ENCODE measurements at regions of chr4 and their contacts with region 1.

Region 1: DNA sequence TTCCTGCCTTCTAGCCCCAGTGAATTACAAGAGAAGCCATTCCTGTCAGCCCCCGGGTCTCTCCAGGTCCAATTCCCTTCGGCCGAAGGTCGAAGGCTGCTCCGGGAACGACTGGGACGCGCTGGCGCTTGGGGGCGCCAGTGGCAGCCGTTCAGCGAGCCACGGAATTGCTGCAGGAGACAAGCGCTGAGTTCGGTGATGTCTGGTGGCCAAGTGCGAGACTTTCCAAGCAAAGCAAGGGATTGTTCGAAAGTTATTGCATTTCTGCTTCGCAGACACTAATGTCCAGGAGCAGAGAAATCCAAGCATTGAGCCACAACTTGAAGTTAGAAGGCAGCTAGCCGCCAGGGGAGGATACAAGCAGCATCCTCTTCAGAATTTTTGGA is 1.1 kb upstream of the DKK2 start:
- DNase-seq: no peak
- H3K4me3 Mint-ChIP-seq: no peak overlapping the region
- H3K27ac Mint-ChIP-seq: no peak overlapping the region
- H3K4me1 Mint-ChIP-seq: no peaks in the 10 kb centered on the region
- H3K27me3 Mint-ChIP-seq: no peaks in the 10 kb centered on the region
- CTCF ChIP-seq: no peak

Region 2: DNA sequence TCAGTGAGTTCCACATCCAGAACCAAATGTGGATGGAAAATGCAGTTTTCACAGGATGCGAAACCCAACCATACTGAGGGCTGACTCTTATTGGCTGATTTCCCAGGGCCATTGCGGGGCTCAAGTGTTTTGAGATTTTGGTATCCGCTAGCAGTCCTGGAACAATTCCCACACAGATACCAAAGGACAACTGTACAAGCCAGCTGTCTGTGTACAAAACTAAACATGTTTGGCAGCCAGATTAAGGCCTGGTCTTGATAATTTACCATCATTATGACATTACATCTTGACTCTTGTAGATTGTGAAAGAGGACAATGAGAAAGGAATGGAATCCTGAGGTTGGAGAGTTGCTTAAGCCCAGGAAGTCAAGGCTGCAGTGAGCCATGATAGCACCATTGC is 123.0 kb before region 1 on chr4:
- CTCF ChIA-PET with region 1: no interaction called
- intact Hi-C with region 1: loop called (anchors 5 kb)
- DNase-seq: no peak
- H3K4me3 Mint-ChIP-seq: no peak overlapping the region
- H3K27ac Mint-ChIP-seq: no peak overlapping the region
- H3K4me1 Mint-ChIP-seq: no peaks in the 10 kb centered on the region
- H3K27me3 Mint-ChIP-seq: no peaks in the 10 kb centered on the region
- CTCF ChIP-seq: no peak

Region 3: DNA sequence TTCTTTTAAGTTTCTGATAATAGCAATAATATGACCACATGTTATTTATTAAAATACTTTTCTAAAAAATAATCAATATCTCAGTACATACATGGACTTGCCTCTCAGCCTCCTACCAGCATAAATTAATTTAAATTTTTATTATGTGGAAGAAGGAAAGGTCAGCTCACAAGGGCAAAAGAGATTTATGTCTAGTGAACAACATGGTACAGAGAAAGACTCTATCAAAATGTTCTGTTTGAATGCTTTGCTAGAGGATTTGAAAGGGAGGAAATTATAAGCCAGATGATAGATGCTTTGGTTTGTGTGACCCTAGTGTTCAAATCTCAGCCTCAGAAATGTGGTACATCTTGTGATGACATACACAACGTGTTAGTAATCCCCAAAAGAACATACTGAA is 95.4 kb before region 1 on chr4:
- CTCF ChIA-PET with region 1: no interaction called
- intact Hi-C with region 1: no loop called
- DNase-seq: no peak
- H3K4me3 Mint-ChIP-seq: no peak overlapping the region
- H3K27ac Mint-ChIP-seq: no peak overlapping the region
- H3K4me1 Mint-ChIP-seq: no peaks in the 10 kb centered on the region
- H3K27me3 Mint-ChIP-seq: no peaks in the 10 kb centered on the region
- CTCF ChIP-seq: no peak

Region 4: GRCh38 chr4:107519053-107519452 is 481.9 kb after region 1 on chr4:
- CTCF ChIA-PET with region 1: no interaction called
- intact Hi-C with region 1: loop called (anchors 2 kb)
- DNase-seq: peak; percentile 27
- H3K4me3 Mint-ChIP-seq: no peak overlapping the region
- H3K27ac Mint-ChIP-seq: no peak overlapping the region
- H3K4me1 Mint-ChIP-seq: no peaks in the 10 kb centered on the region
- H3K27me3 Mint-ChIP-seq: no peaks in the 10 kb centered on the region
- CTCF ChIP-seq: no peak

Measured in Calu3 (cell line).